ENCODE measurements at regions of chr7 and their contacts with region 1.

Region 1: GRCh38 chr7:16071246-16071857 is 350.0 kb downstream of the CRPPA start:
- DNase-seq: no peak
- H3K4me3 ChIP-seq: no peak overlapping the region
- H3K27ac ChIP-seq: no peak overlapping the region
- H3K4me1 ChIP-seq: peaks cover 14 to 28% (median 19%) of the 10 kb centered on the region in 4 donors
- H3K27me3 ChIP-seq: no peaks in the 10 kb centered on the region
- CTCF ChIP-seq: peak; percentile 78 to 81 (median 79)
- EP300 ChIP-seq: no peak
- POLR2A ChIP-seq: no peak

Region 2: GRCh38 chr7:15686295-15686956 is 384.9 kb before region 1 on chr7 and contains the start of gene MEOX2:
- intact Hi-C with region 1: loop called (anchors 5 kb)
- DNase-seq: peak; percentile 92
- H3K4me3 ChIP-seq: peak within 1 kb of the TSS; percentile 61 to 73 (median 68)
- H3K27ac ChIP-seq: peak within 1 kb of the TSS; percentile 79 to 89 (median 86)
- H3K4me1 ChIP-seq: peaks cover 7 to 37% (median 21%) of the 10 kb centered on the region in 4 donors
- H3K27me3 ChIP-seq: peaks cover 0 to 43% (median 13%) of the 10 kb centered on the region in 4 donors
- CTCF ChIP-seq: no peak
- EP300 ChIP-seq: no peak
- POLR2A ChIP-seq: peak; percentile 18
- total RNA-seq, gene MEOX2: 3.6 to 32.3 (median 13.0) TPM

Region 3: DNA sequence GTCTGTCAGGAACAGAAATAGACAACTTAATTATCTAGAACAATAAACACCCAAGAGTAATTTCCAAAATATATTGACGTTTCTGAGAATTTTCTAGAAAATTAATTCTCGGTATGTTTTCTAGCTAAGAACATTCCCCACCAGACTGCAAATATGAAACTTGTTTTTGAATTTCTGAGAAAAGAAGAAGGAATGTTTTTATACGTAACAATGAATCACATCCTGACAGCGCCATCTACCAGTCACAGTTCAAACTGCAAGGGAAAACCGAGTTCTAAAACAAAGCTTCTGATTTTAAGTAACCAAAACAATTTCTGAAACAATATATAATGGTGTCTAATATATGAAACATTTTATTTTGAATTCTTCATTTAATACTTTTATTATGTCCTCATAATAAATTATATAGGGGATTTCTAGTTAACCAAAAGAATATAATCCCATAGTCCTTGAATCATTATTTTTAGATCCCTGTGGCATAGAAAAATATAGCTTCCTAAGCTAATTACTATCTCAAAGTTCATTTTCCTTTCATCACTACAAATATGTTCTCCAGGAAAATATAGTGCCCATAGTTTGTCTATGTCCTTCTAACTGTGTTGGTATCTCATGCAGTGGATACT is 350.4 kb before region 1 on chr7:
- intact Hi-C with region 1: loop called (anchors 5 kb)
- DNase-seq: no peak
- H3K4me3 ChIP-seq: no peak overlapping the region
- H3K27ac ChIP-seq: no peak overlapping the region
- H3K4me1 ChIP-seq: peaks cover 0 to 4% (median 0%) of the 10 kb centered on the region in 4 donors
- H3K27me3 ChIP-seq: no peaks in the 10 kb centered on the region
- CTCF ChIP-seq: peak; percentile 66 to 78 (median 71)
- EP300 ChIP-seq: no peak
- POLR2A ChIP-seq: no peak

Region 4: GRCh38 chr7:16416289-16417282 is 345.2 kb after region 1 on chr7:
- intact Hi-C with region 1: loop called (anchors 10 kb)
- DNase-seq: no peak
- H3K4me3 ChIP-seq: no peak overlapping the region
- H3K27ac ChIP-seq: no peak overlapping the region
- H3K4me1 ChIP-seq: peaks cover 17 to 27% (median 23%) of the 10 kb centered on the region in 4 donors
- H3K27me3 ChIP-seq: no peaks in the 10 kb centered on the region
- CTCF ChIP-seq: no peak
- EP300 ChIP-seq: no peak
- POLR2A ChIP-seq: no peak

Region 5: DNA sequence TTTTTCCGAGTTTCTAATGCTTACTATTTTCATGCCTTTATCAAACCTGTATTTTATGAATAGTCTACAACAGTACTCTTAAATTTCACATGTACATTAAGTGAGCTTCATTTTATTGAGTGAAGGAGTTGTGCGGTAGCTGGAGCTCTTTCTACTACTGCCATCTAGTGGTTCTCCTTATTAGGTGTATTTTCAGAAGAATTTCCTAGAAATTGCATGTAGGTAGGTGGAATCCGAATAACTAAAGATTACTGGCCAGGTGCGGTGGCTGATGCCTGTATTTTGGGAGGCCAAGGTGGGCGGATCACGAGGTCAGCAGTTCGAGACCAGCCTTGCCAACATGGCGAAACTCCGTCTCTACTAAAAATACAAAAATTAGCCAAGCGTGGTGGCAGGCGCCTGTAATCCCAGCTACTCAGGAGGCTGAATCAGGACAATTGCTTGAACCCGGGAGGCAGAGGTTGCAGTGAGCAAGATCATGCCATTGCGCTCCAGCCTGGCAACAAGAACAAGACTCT is 493.6 kb after region 1 on chr7:
- intact Hi-C with region 1: loop called (anchors 2 kb)
- DNase-seq: no peak
- H3K4me3 ChIP-seq: no peak overlapping the region
- H3K27ac ChIP-seq: no peak overlapping the region
- H3K4me1 ChIP-seq: peaks cover 0 to 9% (median 0%) of the 10 kb centered on the region in 4 donors
- H3K27me3 ChIP-seq: no peaks in the 10 kb centered on the region
- CTCF ChIP-seq: peak; percentile 60 to 83 (median 78)
- EP300 ChIP-seq: no peak
- POLR2A ChIP-seq: no peak